Activated B cell treated with CpG ODN at 0.5 μM for 24 hours (primary cell): ENCODE measurements at regions of chr17 and their contacts with region 1.

Region 1: DNA sequence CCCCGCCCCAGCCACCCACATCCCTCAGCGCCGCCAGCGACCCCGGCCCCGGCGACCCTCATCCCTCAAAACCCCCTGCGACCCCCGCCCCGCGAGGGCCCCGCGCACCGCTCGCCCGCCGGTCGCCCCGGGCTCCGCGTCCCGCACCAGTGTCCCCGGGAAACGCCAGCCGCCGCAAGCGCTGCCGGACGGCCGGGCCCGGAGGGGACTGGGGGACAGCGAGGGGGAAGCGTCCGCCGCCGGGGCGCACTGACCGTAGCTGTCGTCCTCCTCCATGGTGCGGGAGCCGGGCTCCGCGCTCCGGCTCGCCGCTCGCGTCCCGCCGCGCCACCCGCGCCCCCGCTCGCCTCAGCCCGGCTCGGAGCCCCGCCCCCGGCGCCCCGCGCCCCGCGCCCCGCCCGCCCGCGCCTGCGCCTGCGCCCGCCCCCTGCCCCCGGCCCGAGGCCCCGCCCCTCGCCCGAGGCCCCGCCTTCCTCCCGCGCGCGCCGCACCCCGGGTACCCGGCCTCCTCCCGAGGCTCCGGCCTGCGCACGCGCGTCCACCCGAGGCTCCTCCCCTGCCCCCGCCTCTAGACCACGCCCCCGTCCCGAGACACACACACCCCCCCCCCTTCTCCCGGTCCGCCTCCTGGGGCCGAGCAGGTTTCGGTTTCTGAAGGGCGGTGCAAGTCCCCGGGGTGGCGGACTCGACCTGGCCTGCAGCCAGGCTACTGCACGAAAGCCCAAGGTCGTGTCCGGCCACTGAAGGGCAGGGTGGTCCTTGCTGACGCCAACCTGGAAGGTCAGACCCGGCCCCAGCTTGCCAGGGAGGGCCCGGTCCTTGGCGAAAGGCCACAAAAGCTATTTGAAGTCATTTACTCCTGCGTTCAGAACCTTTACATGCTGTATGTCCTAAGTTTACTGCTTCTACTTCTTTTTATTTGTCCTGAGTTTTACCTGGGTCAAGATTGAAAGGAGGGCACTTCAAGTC is at the start of gene CYTH1:
- DNase-seq: peak; percentile 98
- ATAC-seq: peak; percentile 80
- H3K4me3 Mint-ChIP-seq: peak within 1 kb of the TSS; percentile 92
- H3K27ac Mint-ChIP-seq: peak within 1 kb of the TSS; percentile 93
- H3K4me1 Mint-ChIP-seq: peaks cover 40% of the 10 kb centered on the region
- H3K27me3 Mint-ChIP-seq: no peaks in the 10 kb centered on the region
- CTCF ChIP-seq: no peak
- total RNA-seq, gene CYTH1: 368 and 391 TPM in 2 replicates

Region 2: DNA sequence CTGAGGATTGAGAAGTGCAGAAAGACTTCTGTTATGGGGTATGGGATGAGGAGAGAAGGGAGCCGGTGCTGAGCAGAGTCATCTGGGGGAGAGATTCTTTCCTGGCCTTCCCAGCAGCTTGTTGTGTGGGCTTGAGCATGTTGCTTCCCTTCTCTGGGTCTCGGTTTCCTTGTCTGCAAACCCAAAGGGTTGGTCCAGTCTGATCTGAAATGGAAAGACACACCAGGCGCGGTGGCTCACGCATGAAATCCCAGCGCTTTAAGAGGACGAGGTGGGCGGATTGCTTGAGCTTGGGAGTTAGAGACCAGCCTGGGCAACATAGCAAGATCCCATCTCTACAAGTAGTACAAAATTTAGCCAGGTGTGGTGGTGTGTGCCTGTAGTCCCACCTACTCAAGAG is 428.4 kb before region 1 on chr17:
- CTCF ChIA-PET with region 1: no interaction called
- POLR2A ChIA-PET with region 1: no interaction called
- intact Hi-C with region 1: no loop called
- DNase-seq: no peak
- ATAC-seq: no peak
- H3K4me3 Mint-ChIP-seq: no peak overlapping the region
- H3K27ac Mint-ChIP-seq: no peak overlapping the region
- H3K4me1 Mint-ChIP-seq: peaks cover 85% of the 10 kb centered on the region
- H3K27me3 Mint-ChIP-seq: no peaks in the 10 kb centered on the region
- CTCF ChIP-seq: no peak

Region 3: GRCh38 chr17:78723001-78723796 is 59.0 kb before region 1 on chr17:
- CTCF ChIA-PET with region 1: interaction called, 3 read pairs
- POLR2A ChIA-PET with region 1: interaction called, 20 read pairs
- intact Hi-C with region 1: no loop called
- DNase-seq: no peak
- ATAC-seq: no peak
- H3K4me3 Mint-ChIP-seq: peak overlapping the region; percentile 77
- H3K27ac Mint-ChIP-seq: peak overlapping the region; percentile 91
- H3K4me1 Mint-ChIP-seq: peaks cover 99% of the 10 kb centered on the region
- H3K27me3 Mint-ChIP-seq: no peaks in the 10 kb centered on the region
- CTCF ChIP-seq: no peak

Region 4: GRCh38 chr17:78769196-78769773 is 12.9 kb before region 1 on chr17:
- CTCF ChIA-PET with region 1: no interaction called
- POLR2A ChIA-PET with region 1: interaction called, 24 read pairs
- intact Hi-C with region 1: loop called (anchors 1 kb)
- DNase-seq: no peak
- ATAC-seq: no peak
- H3K4me3 Mint-ChIP-seq: no peak overlapping the region
- H3K27ac Mint-ChIP-seq: no peak overlapping the region
- H3K4me1 Mint-ChIP-seq: peaks cover 47% of the 10 kb centered on the region
- H3K27me3 Mint-ChIP-seq: no peaks in the 10 kb centered on the region
- CTCF ChIP-seq: no peak